Activated CD8-positive, alpha-beta T cell treated with anti-CD3 and anti-CD28 coated beads, Interleukin-2, amount 10 ng/mL, durations not matched to agents 7 days and 5 days (primary cell): ENCODE measurements at regions of chr16 and their contacts with region 1.

Region 1: DNA sequence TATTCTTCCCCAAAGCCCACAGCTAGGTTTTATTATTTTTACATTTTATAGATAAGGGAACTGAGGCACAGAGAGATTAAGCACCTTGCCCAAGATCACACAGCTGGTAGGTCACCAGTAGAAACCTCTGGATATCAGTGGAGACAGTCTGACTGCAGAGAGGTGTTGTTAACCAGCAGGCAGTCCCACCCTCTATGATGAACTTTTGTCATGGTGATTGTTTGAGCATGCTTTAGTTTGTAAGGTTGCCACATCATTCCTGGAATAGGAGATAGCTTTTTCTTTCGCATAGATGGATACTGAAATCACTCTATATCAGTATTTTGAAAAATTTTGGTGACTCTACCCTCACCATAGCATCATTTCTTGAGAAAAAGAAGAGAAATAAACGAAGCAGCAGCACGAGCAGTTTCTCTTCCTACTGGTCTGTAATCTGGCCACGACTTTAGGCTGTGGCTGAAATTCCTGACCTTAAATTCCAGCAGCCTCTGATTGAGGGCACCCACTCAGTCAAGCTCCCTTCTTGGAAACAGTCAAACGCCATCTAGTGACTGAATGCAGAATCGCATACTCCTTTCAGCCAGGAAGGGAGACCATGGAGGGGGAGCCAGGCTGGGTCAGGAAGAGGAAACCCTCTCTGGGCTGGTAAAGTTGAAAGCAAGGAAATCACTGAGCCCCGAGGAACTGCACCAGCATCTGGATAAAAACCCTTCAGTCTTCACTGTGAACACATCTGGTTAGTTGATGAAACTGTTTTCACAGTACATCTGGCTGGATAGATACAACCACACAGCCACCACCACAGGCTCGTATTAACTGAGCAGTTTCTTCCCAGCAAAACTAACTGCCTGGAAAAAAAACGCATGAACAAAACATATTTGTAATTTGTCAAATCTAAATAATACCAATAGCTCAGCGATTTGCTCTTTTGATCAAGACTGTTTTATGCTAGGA is 108.4 kb upstream of the XYLT1 start:
- DNase-seq: peak; percentile 76
- ATAC-seq: peak; percentile 85
- H3K4me3 Mint-ChIP-seq: no peak overlapping the region
- H3K27ac Mint-ChIP-seq: no peak overlapping the region
- H3K4me1 Mint-ChIP-seq: peaks cover 4% of the 10 kb centered on the region
- H3K27me3 Mint-ChIP-seq: peaks cover 19% of the 10 kb centered on the region

Region 2: GRCh38 chr16:17476414-17477270 is 102.6 kb before region 1 on chr16:
- CTCF ChIA-PET with region 1: interaction called, 18 read pairs
- POLR2A ChIA-PET with region 1: no interaction called
- DNase-seq: peak; percentile 66
- ATAC-seq: peak; percentile 76
- H3K4me3 Mint-ChIP-seq: no peak overlapping the region
- H3K27ac Mint-ChIP-seq: no peak overlapping the region
- H3K4me1 Mint-ChIP-seq: peaks cover 35% of the 10 kb centered on the region
- H3K27me3 Mint-ChIP-seq: peaks cover 27% of the 10 kb centered on the region

Region 3: DNA sequence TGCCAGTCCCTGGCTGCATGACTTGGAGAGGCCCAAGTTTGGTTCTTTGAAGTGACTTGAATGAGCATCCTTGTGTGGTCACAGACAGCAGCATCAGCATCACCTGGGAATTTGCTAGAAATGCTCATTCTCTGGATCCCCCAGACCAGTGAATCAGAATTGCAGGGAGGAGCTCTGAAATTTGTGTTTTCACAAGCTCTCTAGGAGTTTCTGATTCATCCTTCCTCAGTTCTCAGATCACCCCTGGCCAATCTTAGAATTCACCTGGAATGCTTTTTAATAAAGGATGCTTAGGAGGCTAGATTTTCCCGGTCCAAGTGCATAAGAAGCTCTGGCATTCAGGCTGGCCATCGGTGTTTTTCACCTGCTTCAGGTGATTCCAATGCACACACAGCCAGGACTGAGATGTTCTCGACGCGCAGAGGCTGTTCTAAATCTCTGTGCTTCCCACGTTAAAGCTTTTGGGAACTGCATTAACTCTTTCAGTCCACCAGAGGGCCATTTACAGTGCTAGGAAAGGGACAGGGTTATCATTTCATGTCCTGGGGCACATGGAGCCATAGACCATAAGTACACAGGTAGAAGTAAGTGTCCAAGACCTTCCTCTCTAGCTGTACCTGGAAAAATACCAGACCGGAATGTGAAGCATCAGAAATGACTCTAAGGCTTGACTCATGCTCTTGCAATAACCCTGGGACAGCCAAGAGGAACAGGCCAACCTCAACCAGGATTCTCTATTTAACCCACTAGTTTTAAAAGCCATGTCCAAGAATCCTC is 22.7 kb before region 1 on chr16:
- CTCF ChIA-PET with region 1: interaction called, 26 read pairs
- POLR2A ChIA-PET with region 1: no interaction called
- DNase-seq: no peak
- ATAC-seq: no peak
- H3K4me3 Mint-ChIP-seq: no peak overlapping the region
- H3K27ac Mint-ChIP-seq: no peak overlapping the region
- H3K4me1 Mint-ChIP-seq: no peaks in the 10 kb centered on the region
- H3K27me3 Mint-ChIP-seq: peaks cover 15% of the 10 kb centered on the region

Region 4: DNA sequence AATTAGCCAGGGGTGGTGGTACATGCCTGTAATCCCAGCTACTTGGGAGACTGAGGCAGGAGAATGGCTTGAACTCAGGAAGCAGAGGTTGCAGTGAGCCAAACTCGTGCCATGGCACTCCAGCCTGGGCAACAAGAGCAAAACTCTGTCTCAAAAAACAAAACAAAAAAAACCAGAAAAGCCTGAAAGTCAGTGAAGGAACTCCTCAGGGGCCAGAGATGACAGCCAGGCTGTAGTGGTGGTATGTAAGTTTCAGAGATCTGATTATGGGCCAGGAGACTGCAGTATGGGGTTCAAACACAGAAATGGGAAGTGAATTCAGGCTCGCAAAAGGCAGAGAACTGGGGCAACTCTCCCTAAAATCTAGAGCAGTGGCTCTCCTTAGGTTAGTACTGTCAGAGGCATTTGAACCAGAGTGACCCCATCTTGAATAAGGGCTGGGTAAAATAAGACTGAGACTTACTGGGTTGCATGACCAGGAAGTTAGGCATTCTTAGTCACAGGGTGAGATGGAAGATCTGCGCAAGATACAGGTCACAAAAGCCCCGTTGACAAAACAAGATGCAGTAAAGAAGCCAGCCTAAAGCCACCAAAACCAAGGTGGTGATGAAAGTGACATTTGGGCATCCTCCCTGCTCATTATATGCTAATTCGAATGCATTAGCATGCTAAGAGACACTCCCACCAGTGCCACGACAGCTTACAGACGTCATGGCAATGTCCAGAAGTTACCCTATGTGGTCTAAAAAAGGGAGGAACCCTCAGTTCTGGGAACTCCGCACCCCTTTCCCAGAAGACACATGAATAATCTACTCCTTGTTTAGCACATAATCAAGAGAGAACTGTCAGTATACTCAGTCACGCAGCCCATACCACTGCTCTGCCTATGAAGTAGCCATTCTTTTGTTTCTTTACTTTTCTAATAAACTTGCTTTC is 11.8 kb after region 1 on chr16:
- CTCF ChIA-PET with region 1: interaction called, 24 read pairs
- POLR2A ChIA-PET with region 1: no interaction called
- DNase-seq: peak; percentile 61
- ATAC-seq: peak; percentile 76
- H3K4me3 Mint-ChIP-seq: no peak overlapping the region
- H3K27ac Mint-ChIP-seq: peak overlapping the region; percentile 71
- H3K4me1 Mint-ChIP-seq: peaks cover 10% of the 10 kb centered on the region
- H3K27me3 Mint-ChIP-seq: peaks cover 10% of the 10 kb centered on the region

Region 5: DNA sequence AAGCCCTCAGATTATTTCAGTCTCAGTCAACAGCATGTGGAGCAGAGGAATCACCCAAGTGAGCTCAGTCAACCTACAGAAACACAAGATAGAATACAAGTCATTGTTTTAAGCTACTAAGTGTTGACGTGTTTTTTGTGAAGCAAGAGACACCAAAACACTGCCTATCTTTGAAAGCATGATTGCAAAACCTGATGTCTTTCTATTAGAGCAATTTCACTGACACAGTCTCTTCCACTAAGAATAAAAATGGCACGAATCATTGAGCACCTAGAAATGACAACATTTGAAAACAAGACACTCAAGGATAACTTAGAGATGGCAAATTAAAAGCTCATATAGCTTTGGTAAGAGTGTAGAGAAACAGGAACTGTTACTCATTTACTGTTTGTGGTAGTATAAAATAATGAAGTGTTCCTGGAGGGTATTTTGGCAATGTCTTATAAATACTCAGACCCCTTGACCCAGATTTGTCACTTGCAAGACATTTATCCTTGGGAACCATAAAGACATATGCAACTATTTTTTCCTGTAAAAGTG is 298.7 kb after region 1 on chr16:
- CTCF ChIA-PET with region 1: no interaction called
- POLR2A ChIA-PET with region 1: no interaction called
- DNase-seq: no peak
- ATAC-seq: no peak
- H3K4me3 Mint-ChIP-seq: no peak overlapping the region
- H3K27ac Mint-ChIP-seq: no peak overlapping the region
- H3K4me1 Mint-ChIP-seq: no peaks in the 10 kb centered on the region
- H3K27me3 Mint-ChIP-seq: peaks cover 3% of the 10 kb centered on the region